ENCODE measurements at regions of chr22 and their contacts with region 1.

Region 1: GRCh38 chr22:30485362-30485988 is 13.7 kb upstream of the SEC14L3 start:
- DNase-seq: peak; percentile 83
- ATAC-seq: peak; percentile 99
- H3K4me3 Mint-ChIP-seq: no peak overlapping the region
- H3K27ac Mint-ChIP-seq: no peak overlapping the region
- H3K4me1 Mint-ChIP-seq: peaks cover 7% of the 10 kb centered on the region
- H3K27me3 Mint-ChIP-seq: no peaks in the 10 kb centered on the region

Region 2: DNA sequence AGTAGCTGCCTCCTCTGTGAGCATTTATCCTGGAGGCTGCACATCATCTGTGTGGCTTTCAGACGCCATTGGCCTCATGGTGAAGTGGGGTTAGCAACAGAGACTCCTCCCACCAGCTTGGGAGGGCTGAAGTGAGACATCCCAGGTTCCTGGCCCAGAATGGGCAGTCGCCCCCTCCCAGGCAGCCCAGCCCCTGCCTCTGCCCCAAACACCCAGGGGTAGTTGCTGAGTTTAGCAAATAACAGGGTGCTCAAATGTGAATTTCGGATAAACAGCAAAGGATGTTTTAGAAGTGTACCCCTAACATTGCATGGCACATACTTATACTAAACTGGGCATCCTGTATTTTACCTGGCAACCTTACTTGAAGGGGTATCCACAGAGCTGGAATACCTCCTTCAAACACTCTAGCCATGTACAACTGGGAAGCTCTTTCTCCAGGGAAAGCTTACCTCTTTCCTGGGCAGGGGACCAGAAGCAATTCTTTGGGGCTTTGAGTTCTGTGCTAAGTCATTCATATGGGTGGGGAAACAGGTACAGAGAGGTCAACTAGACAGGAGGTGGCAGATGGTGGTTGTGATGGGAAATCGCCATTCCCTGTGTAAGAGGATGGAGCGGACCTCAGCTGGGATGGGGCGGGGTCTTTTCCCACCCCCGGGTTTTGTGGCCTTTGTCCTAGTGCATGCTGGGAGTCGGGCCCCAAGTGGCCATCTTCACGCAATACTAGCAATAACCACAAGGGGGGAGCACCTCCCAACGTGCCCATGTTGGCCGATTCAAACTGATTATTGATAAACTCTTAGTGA is 40.6 kb before region 1 on chr22:
- CTCF ChIA-PET with region 1: interaction called, 44 read pairs
- POLR2A ChIA-PET with region 1: no interaction called
- DNase-seq: peak; percentile 70
- ATAC-seq: peak; percentile 43
- H3K4me3 Mint-ChIP-seq: no peak overlapping the region
- H3K27ac Mint-ChIP-seq: no peak overlapping the region
- H3K4me1 Mint-ChIP-seq: peaks cover 32% of the 10 kb centered on the region
- H3K27me3 Mint-ChIP-seq: peaks cover 18% of the 10 kb centered on the region

Region 3: DNA sequence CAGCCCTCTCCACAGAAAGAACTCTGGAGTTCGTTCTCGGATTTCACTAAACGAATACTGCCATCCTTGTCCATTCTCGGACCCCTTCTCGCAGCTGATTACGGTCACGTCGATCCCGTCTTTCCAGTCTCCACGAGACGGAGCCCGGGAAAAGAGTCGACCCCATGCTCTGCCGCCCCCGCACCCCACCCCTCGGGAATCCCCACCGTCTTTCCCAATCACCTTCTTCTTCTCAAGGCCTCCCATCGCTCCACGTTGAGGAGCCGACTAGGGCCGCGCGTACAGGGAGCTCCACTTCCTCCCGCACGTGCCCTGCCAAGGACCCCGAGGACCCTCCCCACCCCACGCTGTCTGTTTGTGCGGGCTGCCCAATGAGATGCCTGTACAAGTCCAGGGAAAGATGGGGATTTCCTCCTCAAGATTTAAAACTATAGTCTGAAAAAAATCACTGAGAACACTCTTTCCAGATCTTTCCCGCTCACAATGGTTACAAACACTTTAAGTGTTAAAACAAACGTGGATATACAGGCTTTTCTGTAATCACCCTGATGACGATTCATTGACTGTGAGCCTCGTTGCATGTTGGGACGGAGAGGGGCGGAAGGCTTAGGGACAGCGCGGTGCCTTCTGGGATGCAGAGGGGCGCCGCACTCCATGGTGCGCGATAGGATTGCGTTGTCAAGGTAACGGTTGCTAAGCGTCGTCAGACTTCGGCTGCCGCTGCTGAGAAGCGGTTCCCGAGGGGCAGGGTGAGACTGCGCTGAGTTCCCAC is 106.3 kb after region 1 on chr22 and contains the start of gene PES1:
- CTCF ChIA-PET with region 1: no interaction called
- POLR2A ChIA-PET with region 1: no interaction called
- DNase-seq: peak; percentile 97
- ATAC-seq: peak; percentile 97
- H3K4me3 Mint-ChIP-seq: no peak within 1 kb of the TSS
- H3K27ac Mint-ChIP-seq: no peak within 1 kb of the TSS
- H3K4me1 Mint-ChIP-seq: no peaks in the 10 kb centered on the region
- H3K27me3 Mint-ChIP-seq: peaks cover 4% of the 10 kb centered on the region
- total RNA-seq, gene PES1: 65.8 to 68.8 TPM